ENCODE measurements at regions of chr16 and their contacts with region 1.

Region 1: DNA sequence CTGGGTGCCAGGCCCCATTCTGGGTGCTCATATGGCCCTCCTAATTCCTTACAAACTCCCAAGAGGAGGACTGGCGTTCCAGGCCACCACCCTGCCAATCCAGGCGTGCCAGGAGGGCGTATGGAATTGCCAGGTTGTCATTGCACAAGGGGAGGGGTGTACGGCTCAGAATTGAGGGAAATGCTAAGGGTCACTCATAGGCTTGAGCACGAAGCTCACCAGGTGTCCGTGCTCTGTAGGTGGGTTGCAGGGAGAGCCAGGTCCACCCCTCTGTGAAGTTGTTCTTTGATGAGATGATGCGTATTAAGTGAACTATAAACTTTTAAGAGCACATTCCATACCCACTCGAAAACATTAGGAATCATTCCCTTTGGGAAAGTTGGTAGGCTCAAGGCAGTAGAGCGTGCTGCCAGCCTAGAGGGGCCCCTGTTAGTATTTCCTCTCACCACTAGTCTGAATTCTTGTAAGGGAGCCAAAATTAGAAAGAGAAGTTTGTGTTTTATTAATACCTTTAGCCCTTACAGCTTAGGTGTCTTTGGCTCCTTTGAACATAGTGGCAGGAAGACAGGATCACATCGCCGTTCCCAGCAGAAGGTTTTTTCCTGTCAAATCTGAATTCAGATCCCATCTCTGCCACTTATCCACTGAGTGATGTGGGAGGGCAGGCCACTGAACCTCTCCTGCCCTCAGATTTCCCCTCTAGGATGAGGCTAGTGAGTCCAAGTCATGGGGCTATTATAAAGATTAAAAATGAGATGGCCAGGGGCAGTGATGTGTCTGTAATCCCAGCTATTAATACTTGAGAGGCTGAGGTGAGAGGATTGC is 38.7 kb upstream of the NFAT5 start:
- DNase-seq: no peak
- ATAC-seq: no peak
- H3K4me3 ChIP-seq: no peak overlapping the region
- H3K27ac ChIP-seq: peak overlapping the region; percentile 76
- H3K4me1 ChIP-seq: peaks cover 38% of the 10 kb centered on the region
- H3K27me3 ChIP-seq: no peaks in the 10 kb centered on the region
- CTCF ChIP-seq: no peak

Region 2: DNA sequence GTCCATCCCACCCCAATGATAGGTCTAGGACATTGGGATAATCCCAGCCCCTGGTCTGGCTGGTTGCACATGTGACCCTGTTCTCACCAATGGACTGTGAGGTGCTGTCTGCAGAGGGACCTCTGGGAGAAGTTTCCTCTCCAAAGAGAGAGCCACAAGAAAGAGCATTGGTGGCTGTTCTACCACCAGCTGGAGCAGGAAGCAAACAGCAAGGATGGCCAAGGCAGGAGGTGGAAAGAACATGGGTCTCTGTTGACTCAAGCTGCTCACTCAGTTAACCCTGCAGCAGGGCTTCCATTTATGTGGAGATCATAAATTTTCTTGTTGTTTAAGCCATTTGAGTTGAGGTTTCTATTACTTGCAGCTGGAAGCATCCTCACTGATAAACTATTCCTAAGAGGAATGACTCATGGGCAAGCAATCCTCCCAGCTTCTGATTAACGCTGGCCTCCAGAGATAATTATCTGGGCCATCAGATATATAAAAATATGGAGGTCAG is 50.1 kb before region 1 on chr16:
- CTCF ChIA-PET with region 1: no interaction called
- POLR2A ChIA-PET with region 1: interaction called, 17 read pairs
- in situ Hi-C with region 1: no loop called
- intact Hi-C with region 1: no loop called
- DNase-seq: peak; percentile 45
- ATAC-seq: peak; percentile 83
- H3K4me3 ChIP-seq: no peak overlapping the region
- H3K27ac ChIP-seq: peak overlapping the region; percentile 93
- H3K4me1 ChIP-seq: peaks cover 32% of the 10 kb centered on the region
- H3K27me3 ChIP-seq: no peaks in the 10 kb centered on the region
- CTCF ChIP-seq: no peak

Region 3: DNA sequence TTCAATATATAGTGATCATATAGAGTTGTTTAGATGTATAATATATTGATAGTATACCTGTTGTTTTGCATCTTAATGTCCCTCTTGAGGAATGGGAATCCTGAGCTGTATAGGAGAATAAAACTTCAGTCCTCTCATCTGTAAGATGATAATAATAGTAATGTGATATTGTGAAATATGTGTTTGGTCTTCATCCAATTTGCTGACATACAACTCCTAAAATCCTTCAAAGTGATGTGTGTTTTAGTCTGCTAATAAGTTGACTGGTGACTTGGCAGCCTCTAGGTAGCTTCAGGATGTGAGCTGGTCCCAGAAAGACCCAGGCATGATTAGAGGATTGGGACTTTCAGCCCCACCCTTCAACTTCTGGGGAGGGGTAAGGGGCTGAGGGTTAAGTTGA is 15.9 kb after region 1 on chr16:
- CTCF ChIA-PET with region 1: no interaction called
- POLR2A ChIA-PET with region 1: no interaction called
- in situ Hi-C with region 1: no loop called
- intact Hi-C with region 1: no loop called
- DNase-seq: no peak
- ATAC-seq: no peak
- H3K4me3 ChIP-seq: no peak overlapping the region
- H3K27ac ChIP-seq: peak overlapping the region; percentile 29; the same call in 1 of the 2 replicates
- H3K4me1 ChIP-seq: peaks cover 12% of the 10 kb centered on the region
- H3K27me3 ChIP-seq: no peaks in the 10 kb centered on the region
- CTCF ChIP-seq: no peak